Activated T-helper 1 cell treated with anti-CD3 and anti-CD28 coated beads, Interleukin-12 subunit alpha, Interleukin-12 subunit beta, Interleukin-2, Interleukin-4 antibody, amounts not matched to agents 30 ng/mL and 10 ng/mL and 1 ng/mL, durations not matched to agents 14 hours and 24 hours and 36 hours (primary cell): ENCODE measurements at regions of chr10 and their contacts with region 1.

Region 1: DNA sequence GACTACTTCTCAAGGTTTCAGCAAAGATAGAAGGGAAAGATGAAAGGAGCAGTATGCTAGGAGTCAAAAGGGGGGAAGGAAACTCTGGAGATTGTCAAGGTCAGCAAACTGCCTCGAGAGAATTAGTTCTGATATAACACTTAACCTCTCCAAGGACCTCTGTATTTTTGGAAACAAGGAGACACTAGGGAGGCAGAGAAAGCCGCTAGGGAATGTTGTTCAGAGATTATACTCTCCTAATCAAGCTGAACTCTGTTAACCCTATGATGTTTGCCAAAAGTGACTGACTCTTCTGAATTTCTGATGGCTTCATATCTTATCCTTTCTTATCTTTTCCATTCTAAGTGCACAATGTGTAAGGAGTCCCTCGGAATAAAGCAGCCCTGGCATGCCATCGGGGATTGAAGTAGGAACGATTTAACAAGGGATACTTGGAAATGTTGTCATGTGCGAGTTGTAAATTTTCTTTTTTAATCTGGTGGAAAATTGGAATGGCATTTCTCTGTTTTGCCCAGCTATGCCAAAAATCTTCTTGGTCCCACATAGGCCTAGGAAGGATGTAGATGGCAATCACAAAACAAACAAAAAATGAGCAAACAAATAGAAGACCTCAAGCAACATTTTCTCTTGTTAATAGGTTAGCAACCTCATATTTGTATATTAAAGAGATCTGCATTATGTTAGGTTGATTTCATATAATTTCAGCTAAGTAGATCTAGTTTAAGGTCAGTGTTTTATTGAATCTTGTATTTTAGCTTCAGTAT is 27.3 kb downstream of the CREM start:
- DNase-seq: no peak
- H3K4me3 Mint-ChIP-seq: no peak overlapping the region
- H3K27ac Mint-ChIP-seq: no peak overlapping the region
- H3K4me1 Mint-ChIP-seq: peaks cover 44% of the 10 kb centered on the region
- H3K27me3 Mint-ChIP-seq: no peaks in the 10 kb centered on the region

Region 2: DNA sequence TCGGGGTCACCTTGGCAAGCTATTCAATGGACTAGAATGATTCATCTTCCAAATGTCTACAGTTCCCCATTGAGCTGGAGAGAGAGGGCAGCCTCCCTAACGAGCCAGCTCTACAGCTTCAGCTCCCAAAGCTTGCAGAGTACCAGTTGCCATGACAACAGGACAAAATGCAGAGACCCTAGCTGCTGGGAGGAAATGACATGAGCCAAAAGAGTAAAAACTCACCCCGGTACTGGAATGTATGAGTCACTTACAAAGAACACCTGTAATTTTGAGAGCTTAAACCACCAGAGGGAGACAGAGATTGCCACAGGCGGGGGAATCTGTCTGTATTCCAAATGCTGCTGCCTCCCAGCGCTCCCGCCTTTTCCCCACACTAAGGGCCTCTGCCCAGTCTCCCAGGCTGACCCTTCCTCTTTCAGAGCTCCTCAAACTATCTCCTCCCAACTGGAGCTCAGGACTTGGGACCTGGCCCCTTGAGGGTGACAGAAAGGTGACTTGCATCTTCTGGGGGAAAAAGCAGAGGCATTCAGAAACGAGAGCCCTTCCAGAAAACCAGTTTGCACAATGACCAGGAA is 159.2 kb before region 1 on chr10:
- intact Hi-C with region 1: no loop called
- DNase-seq: peak; percentile 61
- H3K4me3 Mint-ChIP-seq: no peak overlapping the region
- H3K27ac Mint-ChIP-seq: peak overlapping the region; percentile 73
- H3K4me1 Mint-ChIP-seq: peaks cover 21% of the 10 kb centered on the region
- H3K27me3 Mint-ChIP-seq: no peaks in the 10 kb centered on the region

Region 3: DNA sequence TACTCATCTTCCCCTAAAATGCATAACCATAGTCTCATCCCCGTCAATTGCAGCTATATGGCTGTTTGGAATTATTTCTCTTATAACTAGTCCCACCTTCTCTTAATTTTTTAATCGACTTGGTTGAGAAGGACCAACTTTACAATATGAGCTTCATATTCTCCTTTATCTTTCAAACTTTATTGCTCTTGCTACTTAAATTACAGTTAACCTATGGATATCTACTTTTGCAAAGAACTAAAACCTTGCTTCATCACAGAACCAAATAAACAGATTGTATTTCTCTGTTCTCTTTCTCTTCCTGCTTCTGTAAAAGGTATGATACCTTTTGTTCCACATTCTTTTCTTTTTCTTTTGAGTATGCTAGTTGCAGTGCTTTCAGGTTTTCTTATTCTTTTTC is 21.2 kb before region 1 on chr10:
- intact Hi-C with region 1: loop called (anchors 1 kb)
- DNase-seq: no peak
- H3K4me3 Mint-ChIP-seq: peak overlapping the region; percentile 71
- H3K27ac Mint-ChIP-seq: peak overlapping the region; percentile 84
- H3K4me1 Mint-ChIP-seq: peaks cover 80% of the 10 kb centered on the region
- H3K27me3 Mint-ChIP-seq: no peaks in the 10 kb centered on the region